Right ventricle myocardium superior (tissue), 1 donor: ENCODE measurements at regions of chr2 and their contacts with region 1.

Region 1: DNA sequence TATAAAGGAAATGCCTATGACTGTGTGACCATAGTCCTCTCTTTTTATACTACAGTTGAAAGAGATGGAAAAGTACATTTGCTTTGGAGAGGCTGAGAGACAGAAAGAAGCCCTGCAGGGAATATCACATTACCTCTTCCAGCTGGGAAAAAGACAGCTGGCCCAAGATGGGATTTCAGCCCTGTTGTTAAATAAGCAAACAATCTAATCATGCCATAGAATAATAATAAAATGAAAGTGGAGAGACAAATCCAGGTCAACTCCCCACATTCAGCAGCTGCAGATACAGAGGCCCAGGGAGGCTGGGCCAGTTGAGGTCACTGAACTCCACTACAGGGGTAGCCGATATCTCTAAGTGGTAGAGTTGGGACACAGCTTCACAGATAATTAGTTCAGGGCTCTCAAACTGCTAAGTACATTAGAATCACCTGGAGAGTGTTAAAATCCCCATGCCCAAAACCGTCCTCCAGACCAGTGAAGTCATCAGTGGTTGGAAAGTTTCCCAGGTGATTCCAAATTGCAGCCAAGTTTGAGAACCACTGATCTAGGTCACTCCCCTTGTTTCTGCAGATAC is 81.9 kb downstream of the MOGAT1 start:
- DNase-seq: peak; percentile 59
- ATAC-seq: peak; percentile 96

Region 2: DNA sequence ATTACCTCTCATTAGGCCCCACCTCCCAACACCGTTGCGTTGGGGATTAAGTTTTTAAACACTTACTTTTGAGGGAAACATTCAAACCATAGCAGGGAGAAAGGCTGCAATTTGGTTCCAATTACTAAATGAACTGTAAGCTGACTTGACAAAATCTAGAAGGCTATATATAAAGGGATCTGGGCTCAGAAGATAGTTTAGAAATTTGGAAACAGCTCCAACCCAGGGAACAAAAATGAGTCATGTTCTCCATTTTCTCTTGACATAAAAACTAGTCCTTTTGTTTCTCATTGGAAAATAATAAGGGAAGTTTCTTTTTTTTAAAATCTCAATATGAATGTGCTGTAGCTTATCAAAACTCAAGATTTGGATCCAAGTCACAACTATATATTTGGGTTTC is 64.4 kb before region 1 on chr2:
- intact Hi-C with region 1: no loop called
- DNase-seq: no peak
- ATAC-seq: no peak

Region 3: GRCh38 chr2:222714361-222715241 is 38.7 kb before region 1 on chr2:
- intact Hi-C with region 1: loop called (anchors 5 kb)
- DNase-seq: no peak
- ATAC-seq: peak; percentile 92